ENCODE measurements at regions of chr7 and their contacts with region 1.

Region 1: DNA sequence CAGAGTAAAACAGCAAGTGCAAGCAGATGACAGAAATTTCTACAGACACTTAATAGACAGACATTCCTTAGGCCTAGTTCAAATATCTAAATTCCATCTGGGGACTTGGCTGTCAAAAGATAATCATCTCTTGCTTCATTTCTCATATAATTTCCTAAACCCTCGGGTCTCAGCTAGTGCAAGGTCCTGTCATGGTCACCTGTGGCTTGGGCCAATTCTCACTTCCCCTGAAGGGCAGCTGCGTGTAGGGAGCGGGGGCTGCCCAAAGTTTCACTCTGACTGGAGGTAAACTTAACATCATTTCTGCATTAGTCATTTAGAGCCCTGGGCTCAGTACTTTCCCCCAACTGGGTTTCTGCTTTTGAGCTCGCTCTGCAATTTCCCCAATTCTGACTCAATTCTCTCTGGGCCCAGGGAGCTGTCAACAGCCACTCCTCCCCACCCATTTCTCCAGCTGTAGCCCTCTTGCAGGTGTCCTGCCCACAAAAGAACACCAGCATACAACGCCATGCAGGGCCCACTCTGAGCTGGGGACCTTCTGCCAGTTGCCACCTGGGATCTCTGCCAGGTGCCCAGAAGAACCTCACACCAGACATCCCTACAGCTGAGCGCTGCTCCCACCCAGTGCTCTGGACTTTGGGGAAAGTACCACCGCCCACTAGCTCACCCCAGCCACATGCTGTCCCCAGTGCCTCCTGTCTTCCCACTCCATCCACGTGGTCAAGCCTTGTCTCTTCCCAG is 38.0 kb downstream of the VOPP1 start:
- DNase-seq: peak; percentile 99
- ATAC-seq: peak; percentile 68
- H3K4me3 ChIP-seq: peak overlapping the region; percentile 78
- H3K27ac ChIP-seq: peak overlapping the region; percentile 100
- H3K4me1 ChIP-seq: peaks cover 84% of the 10 kb centered on the region
- H3K27me3 ChIP-seq: no peaks in the 10 kb centered on the region
- CTCF ChIP-seq: no peak
- EP300 ChIP-seq: peak; percentile 100
- POLR2A ChIP-seq: peak; percentile 85
- RAD21 ChIP-seq: peak; percentile 36

Region 2: GRCh38 chr7:55509322-55509721 is 25.0 kb before region 1 on chr7:
- CTCF ChIA-PET with region 1: interaction called, 67 read pairs
- POLR2A ChIA-PET with region 1: interaction called, 122 read pairs
- RAD21 ChIA-PET with region 1: interaction called, 150 read pairs
- SMC1A ChIA-PET with region 1: interaction called, 354 read pairs
- in situ Hi-C with region 1: no loop called
- intact Hi-C with region 1: loop called (anchors 1 kb)
- DNase-seq: no peak
- ATAC-seq: peak; percentile 46
- H3K4me3 ChIP-seq: no peak overlapping the region
- H3K27ac ChIP-seq: peak overlapping the region; percentile 51
- H3K4me1 ChIP-seq: peaks cover 75% of the 10 kb centered on the region
- H3K27me3 ChIP-seq: no peaks in the 10 kb centered on the region
- CTCF ChIP-seq: peak in 1 of 3 experiments; percentile 12; a peak in 1 of 6 replicates
- EP300 ChIP-seq: no peak
- POLR2A ChIP-seq: no peak
- RAD21 ChIP-seq: no peak

Region 3: DNA sequence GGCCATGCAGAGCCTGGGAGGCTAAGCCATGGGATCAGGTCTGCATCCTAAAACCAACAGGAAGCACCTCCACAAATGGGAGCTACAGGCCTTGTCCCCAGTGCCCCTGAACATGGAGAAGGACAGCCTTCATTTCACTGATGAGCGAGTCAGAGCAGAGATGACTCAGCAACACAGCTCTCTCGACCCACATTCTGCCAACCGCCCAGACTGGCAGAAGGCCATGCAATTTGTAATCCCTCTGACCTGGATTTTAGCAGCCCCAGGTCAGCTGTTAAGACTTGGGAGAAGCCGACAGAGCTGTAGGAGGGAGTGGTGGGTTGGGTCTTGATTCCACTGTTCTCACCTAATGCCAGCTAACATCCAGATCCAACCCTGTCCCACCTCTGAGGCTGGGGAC is 12.5 kb after region 1 on chr7:
- CTCF ChIA-PET with region 1: interaction called, 87 read pairs
- POLR2A ChIA-PET with region 1: interaction called, 123 read pairs
- RAD21 ChIA-PET with region 1: interaction called, 179 read pairs
- SMC1A ChIA-PET with region 1: interaction called, 128 read pairs
- in situ Hi-C with region 1: no loop called
- intact Hi-C with region 1: loop called (anchors 1 kb)
- DNase-seq: no peak
- ATAC-seq: peak; percentile 64
- H3K4me3 ChIP-seq: peak overlapping the region; percentile 22; the same call in 1 of the 2 replicates
- H3K27ac ChIP-seq: peak overlapping the region; percentile 82
- H3K4me1 ChIP-seq: peaks cover 72% of the 10 kb centered on the region
- H3K27me3 ChIP-seq: no peaks in the 10 kb centered on the region
- CTCF ChIP-seq: no peak
- EP300 ChIP-seq: no peak
- POLR2A ChIP-seq: no peak
- RAD21 ChIP-seq: no peak

Region 4: DNA sequence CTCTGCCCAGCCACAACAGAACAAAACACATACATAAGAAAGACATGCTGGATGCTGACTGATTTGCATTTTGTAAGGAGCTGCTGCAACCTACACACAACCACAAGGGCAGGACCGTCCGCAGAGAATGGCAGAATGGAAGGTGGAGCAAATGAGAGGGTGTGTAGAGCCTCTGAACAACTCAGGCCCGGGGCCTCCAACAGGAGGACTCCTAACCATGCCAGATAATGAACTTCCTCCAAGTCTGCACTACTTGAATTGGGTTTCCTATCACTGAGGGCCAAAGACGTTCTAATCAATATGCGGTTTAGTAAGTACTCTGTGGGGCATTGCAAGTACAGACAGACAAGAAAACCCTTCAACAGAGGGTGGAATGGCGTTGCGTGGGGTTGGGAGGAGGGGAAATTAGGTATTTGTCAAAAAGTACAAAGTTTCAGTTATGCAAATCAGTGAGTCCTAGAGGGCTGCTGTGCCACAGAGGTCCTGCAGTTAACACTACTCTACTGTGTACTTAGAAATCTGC is 23.4 kb after region 1 on chr7:
- CTCF ChIA-PET with region 1: interaction called, 18 read pairs
- POLR2A ChIA-PET with region 1: interaction called, 39 read pairs
- RAD21 ChIA-PET with region 1: interaction called, 24 read pairs
- SMC1A ChIA-PET with region 1: interaction called, 128 read pairs
- in situ Hi-C with region 1: no loop called
- intact Hi-C with region 1: loop called (anchors 1 kb)
- DNase-seq: peak; percentile 85
- ATAC-seq: peak; percentile 87
- H3K4me3 ChIP-seq: peak overlapping the region; percentile 70
- H3K27ac ChIP-seq: peak overlapping the region; percentile 57
- H3K4me1 ChIP-seq: peaks cover 82% of the 10 kb centered on the region
- H3K27me3 ChIP-seq: no peaks in the 10 kb centered on the region
- CTCF ChIP-seq: peak in 2 of 3 experiments; percentile 7 to 12; a peak in 1 of 6 replicates
- EP300 ChIP-seq: peak; percentile 32 to 54; a peak in 3 of 4 replicates
- POLR2A ChIP-seq: peak; percentile 57
- RAD21 ChIP-seq: no peak

Region 5: DNA sequence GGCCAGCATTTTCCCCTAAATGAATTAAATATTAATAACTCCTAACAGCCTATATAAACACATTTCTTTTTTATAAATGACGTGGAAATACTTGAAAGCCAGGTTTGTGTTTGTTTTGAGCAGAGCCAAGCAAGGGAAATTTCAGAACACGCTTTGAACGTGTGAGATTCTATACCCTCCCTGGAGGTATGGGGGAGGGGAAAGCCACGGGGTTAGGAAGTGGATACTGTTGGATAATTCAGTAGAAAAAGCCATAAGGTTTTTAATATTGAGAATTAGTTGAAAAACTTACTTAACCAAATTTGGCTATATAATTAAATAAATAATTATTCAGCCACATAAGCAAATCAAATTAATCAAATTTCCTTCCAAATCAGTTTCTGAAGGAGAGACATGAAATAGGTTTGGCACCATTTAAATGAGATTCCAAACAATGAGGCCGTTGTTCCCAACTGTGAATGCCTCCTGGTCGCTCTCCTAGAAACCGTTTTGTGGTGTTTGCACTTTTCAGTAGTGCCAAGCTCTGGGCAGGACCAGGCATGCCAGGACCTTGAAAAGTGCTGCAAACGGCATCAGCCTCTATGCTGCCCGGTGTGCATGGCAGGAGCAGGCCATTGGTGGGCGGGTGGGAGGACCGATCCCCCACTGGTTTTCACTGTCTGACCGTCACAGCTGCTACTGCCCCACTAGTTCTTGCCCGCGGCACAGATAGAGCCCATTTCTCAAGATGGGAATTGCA is 240.2 kb after region 1 on chr7:
- CTCF ChIA-PET with region 1: no interaction called
- POLR2A ChIA-PET with region 1: no interaction called
- RAD21 ChIA-PET with region 1: no interaction called
- SMC1A ChIA-PET with region 1: no interaction called
- in situ Hi-C with region 1: no loop called
- intact Hi-C with region 1: no loop called
- DNase-seq: no peak
- ATAC-seq: no peak; the same call in 2 of the 3 replicates
- H3K4me3 ChIP-seq: no peak overlapping the region
- H3K27ac ChIP-seq: no peak overlapping the region
- H3K4me1 ChIP-seq: no peaks in the 10 kb centered on the region
- H3K27me3 ChIP-seq: no peaks in the 10 kb centered on the region
- CTCF ChIP-seq: no peak
- EP300 ChIP-seq: no peak
- POLR2A ChIP-seq: no peak
- RAD21 ChIP-seq: no peak

Region 6: GRCh38 chr7:56051339-56052191 is 517.2 kb after region 1 on chr7 and contains the starts of genes CCT6A and PSPH:
- CTCF ChIA-PET with region 1: no interaction called
- POLR2A ChIA-PET with region 1: interaction called, 3 read pairs
- RAD21 ChIA-PET with region 1: no interaction called
- SMC1A ChIA-PET with region 1: interaction called, 3 read pairs
- in situ Hi-C with region 1: no loop called
- intact Hi-C with region 1: loop called (anchors 5 kb)
- DNase-seq: peak; percentile 87
- ATAC-seq: peak; percentile 94
- H3K4me3 ChIP-seq: peak within 1 kb of the TSS; percentile 86
- H3K27ac ChIP-seq: peak within 1 kb of the TSS; percentile 83
- H3K4me1 ChIP-seq: peaks cover 14% of the 10 kb centered on the region
- H3K27me3 ChIP-seq: no peaks in the 10 kb centered on the region
- CTCF ChIP-seq: no peak
- EP300 ChIP-seq: no peak
- POLR2A ChIP-seq: peak; percentile 91
- RAD21 ChIP-seq: no peak
- polyA plus RNA-seq, gene CCT6A: 191 to 319 TPM
- polyA plus RNA-seq, gene PSPH: 5.2 to 10.5 TPM